ENCODE measurements at regions of chr22 and their contacts with region 1.

Region 1: GRCh38 chr22:22396741-22397276 is 111.7 kb downstream of the ZNF280B start:
- DNase-seq: no peak
- H3K4me3 Mint-ChIP-seq: no peak overlapping the region
- H3K27ac Mint-ChIP-seq: no peak overlapping the region
- H3K4me1 Mint-ChIP-seq: no peaks in the 10 kb centered on the region
- H3K27me3 Mint-ChIP-seq: peaks cover 31% of the 10 kb centered on the region

Region 2: DNA sequence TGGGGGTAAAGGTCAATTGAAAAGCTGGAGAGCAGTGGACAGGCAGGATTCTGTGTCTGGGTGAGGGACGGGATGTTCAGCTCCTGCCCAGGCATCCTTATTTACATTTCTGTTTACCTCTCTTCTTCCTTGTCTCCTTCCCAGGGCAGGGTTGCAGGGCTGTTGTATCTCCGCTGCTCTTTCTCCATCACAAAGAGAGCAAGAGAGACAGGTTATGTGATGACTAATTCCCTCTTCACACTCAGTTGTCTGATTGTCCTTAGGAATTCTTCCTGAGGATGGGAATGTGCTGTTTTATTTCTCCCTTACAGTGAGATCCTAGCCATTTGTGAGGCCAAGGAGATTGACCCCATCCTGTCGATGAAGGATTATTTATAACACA is 47.4 kb before region 1 on chr22:
- intact Hi-C with region 1: loop called (anchors 1 kb)
- DNase-seq: no peak
- H3K4me3 Mint-ChIP-seq: no peak overlapping the region
- H3K27ac Mint-ChIP-seq: no peak overlapping the region
- H3K4me1 Mint-ChIP-seq: peaks cover 2% of the 10 kb centered on the region
- H3K27me3 Mint-ChIP-seq: peaks cover 37% of the 10 kb centered on the region

Measured in activated CD4-positive, alpha-beta T cell treated with anti-CD3 and anti-CD28 coated beads, Interleukin-2, amount 10 ng/mL, durations not matched to agents 24 days and 14 days (primary cell).